Caco-2 (cell line): ENCODE measurements at regions of chr14 and their contacts with region 1.

Region 1: DNA sequence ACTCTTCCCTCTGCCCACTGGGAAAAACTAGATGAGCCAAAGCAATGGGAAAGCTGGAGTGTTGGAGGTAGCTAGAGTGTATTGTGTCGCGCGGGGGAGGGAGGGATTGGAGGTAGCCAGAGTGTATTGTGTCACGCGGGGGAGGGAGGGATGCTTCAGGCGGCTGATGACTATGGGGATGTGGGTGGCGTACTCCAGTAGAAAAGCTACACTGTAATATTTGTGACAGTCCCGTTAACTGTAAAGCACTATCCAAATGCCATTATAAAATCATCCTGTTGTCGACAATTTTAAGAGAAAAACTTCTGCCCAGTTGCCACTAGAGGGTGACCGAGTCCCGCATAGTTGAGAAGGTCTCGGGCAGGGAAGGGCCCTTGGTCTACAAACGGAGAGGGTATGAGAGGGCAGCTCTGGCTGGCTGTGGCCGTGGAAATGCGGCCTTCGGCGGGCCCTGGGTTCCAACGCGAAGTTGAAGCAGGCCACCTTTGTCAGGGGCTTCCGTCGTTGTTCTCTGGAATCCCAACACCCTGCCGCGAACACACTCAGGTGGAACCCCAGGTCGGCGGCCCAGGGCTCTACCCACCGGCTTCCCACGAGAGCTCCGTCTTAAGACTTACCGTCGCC is 15.1 kb upstream of the PLEK2 start:
- DNase-seq: peak; percentile 84 to 85
- H3K4me3 ChIP-seq: no peak overlapping the region
- H3K4me3 Mint-ChIP-seq: no peak overlapping the region
- H3K27ac Mint-ChIP-seq: no peak overlapping the region
- H3K4me1 ChIP-seq: peaks cover 27% of the 10 kb centered on the region
- H3K4me1 Mint-ChIP-seq: peaks cover 10% of the 10 kb centered on the region
- H3K27me3 ChIP-seq: no peaks in the 10 kb centered on the region
- H3K27me3 Mint-ChIP-seq: no peaks in the 10 kb centered on the region
- CTCF ChIP-seq: peak; percentile 78 to 82

Region 2: GRCh38 chr14:67446120-67447032 is 19.3 kb after region 1 on chr14:
- CTCF ChIA-PET with region 1: interaction called, 20 read pairs
- POLR2A ChIA-PET with region 1: no interaction called
- intact Hi-C with region 1: loop called (anchors 2 kb)
- DNase-seq: no peak
- H3K4me3 ChIP-seq: no peak overlapping the region
- H3K4me3 Mint-ChIP-seq: no peak overlapping the region
- H3K27ac Mint-ChIP-seq: peak overlapping the region; percentile 68
- H3K4me1 ChIP-seq: peaks cover 51% of the 10 kb centered on the region
- H3K4me1 Mint-ChIP-seq: peaks cover 29% of the 10 kb centered on the region
- H3K27me3 ChIP-seq: no peaks in the 10 kb centered on the region
- H3K27me3 Mint-ChIP-seq: no peaks in the 10 kb centered on the region
- CTCF ChIP-seq: no peak

Region 3: GRCh38 chr14:67514650-67515385 is 87.7 kb after region 1 on chr14:
- CTCF ChIA-PET with region 1: interaction called, 7 read pairs
- POLR2A ChIA-PET with region 1: no interaction called
- intact Hi-C with region 1: loop called (anchors 1 kb)
- DNase-seq: peak in 1 of 2 experiments; percentile 34
- H3K4me3 ChIP-seq: peak overlapping the region; percentile 52
- H3K4me3 Mint-ChIP-seq: peak overlapping the region; percentile 71
- H3K27ac Mint-ChIP-seq: no peak overlapping the region
- H3K4me1 ChIP-seq: peaks cover 4% of the 10 kb centered on the region; the same call in 1 of the 2 replicates
- H3K4me1 Mint-ChIP-seq: no peaks in the 10 kb centered on the region
- H3K27me3 ChIP-seq: no peaks in the 10 kb centered on the region
- H3K27me3 Mint-ChIP-seq: peaks cover 13% of the 10 kb centered on the region
- CTCF ChIP-seq: no peak

Region 4: DNA sequence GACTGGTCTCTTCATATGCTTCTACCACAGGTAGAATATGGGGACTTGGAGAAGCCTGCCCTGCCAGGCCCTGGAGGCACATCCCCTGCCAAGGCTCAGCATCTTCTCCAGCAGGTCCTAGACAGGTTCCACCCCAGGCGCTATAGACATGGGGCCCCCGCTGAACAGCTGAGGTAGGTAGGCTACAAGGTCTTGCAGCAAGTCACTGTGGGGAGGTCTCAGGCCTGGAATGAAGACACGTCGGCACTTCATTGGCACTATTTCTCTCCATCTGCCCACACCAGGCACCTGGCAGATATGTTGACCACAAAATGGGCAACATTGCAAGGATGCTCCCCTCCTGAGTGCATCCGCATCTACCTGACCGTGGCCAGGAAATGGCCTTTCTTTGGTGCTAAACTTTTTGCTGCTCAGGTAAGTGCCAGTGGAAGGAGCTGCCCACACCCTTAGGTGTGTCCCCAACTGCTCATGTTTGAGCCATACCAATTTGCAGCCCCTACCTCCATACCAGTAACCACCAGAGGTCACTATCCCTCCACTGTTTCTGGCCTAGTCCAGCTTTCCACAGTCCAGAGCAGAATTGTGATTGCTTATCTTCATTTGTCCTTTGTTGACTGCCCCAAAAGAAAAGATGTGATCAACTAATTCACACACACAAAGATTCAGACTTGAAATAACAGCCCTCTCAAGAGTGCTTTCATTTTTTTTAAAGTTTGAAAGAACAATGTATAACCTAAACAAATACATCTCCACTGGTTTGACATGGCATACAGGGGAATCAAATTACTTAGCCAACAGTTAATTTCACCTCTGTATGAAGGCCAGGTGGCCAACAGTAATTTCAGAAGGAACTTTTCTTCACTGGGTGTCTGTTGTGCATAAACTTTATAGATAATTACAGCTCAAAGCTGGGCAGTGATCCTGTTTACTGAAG is 156.9 kb after region 1 on chr14:
- CTCF ChIA-PET with region 1: interaction called, 24 read pairs
- POLR2A ChIA-PET with region 1: no interaction called
- intact Hi-C with region 1: no loop called
- DNase-seq: peak; percentile 62 to 73
- H3K4me3 ChIP-seq: no peak overlapping the region
- H3K4me3 Mint-ChIP-seq: no peak overlapping the region
- H3K27ac Mint-ChIP-seq: no peak overlapping the region
- H3K4me1 ChIP-seq: peaks cover 13% of the 10 kb centered on the region
- H3K4me1 Mint-ChIP-seq: no peaks in the 10 kb centered on the region
- H3K27me3 ChIP-seq: no peaks in the 10 kb centered on the region
- H3K27me3 Mint-ChIP-seq: no peaks in the 10 kb centered on the region
- CTCF ChIP-seq: peak; percentile 78 to 82

Region 5: GRCh38 chr14:67704484-67705089 is 277.5 kb after region 1 on chr14:
- CTCF ChIA-PET with region 1: interaction called, 27 read pairs
- POLR2A ChIA-PET with region 1: no interaction called
- intact Hi-C with region 1: loop called (anchors 2 kb)
- DNase-seq: peak in 1 of 2 experiments; percentile 64
- H3K4me3 ChIP-seq: no peak overlapping the region
- H3K4me3 Mint-ChIP-seq: no peak overlapping the region
- H3K27ac Mint-ChIP-seq: no peak overlapping the region
- H3K4me1 ChIP-seq: no peaks in the 10 kb centered on the region
- H3K4me1 Mint-ChIP-seq: no peaks in the 10 kb centered on the region
- H3K27me3 ChIP-seq: no peaks in the 10 kb centered on the region
- H3K27me3 Mint-ChIP-seq: no peaks in the 10 kb centered on the region
- CTCF ChIP-seq: peak; percentile 73 to 78